A673 (cell line): ENCODE measurements at regions of chrX and their contacts with region 1.

Region 1: DNA sequence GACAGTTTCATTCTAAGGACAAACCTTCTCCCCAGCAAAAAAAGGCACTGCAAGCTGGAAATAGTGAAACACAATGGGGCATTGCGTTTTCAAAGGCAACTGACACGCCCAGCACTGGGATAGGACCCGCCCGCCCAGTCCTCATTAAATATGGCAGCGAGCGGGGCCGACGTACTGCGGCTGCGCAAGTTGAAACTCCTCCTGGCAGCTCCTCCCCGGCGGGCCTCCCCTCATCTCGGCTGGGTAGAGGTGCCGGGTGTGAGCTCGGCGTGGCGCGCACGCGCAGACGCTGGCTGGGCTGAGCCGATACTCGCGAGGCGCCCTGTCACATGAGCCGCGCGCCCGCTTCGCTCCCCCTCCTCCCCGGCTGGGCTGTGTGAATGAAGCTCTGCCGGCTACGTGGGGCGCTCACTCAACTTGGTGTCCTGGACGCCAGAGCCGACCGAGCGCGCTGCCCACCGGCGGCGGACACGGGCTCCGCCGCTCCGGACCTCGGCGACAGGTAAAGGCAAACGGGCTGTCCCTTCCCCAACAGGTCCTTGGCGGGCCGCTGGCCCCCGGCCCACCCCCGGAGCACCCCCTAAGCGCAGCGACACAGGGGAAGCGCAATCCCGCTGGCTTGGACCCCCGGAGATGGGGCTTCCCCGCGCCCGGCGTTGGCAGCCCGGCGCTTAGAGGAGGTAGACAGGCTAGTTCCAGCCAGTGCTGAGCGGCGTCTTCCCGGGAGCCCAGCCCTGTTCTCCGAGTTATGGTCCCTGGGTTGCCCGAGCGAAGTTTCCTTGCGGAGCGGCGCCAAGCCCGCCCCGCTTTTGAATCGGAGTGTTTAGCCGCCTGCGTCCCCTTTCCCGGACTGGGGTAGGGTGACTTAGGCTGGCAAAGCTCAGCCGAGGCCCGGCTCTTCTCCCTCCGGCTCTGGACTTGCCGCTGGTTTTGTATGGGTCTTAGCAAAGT is at the start of gene CLCN5:
- DNase-seq: peak; percentile 96
- H3K4me3 ChIP-seq: peak within 1 kb of the TSS; percentile 69
- H3K27ac ChIP-seq: peak within 1 kb of the TSS; percentile 79
- H3K4me1 ChIP-seq: peaks cover 7% of the 10 kb centered on the region
- H3K27me3 ChIP-seq: no peaks in the 10 kb centered on the region
- CTCF ChIP-seq: no peak
- total RNA-seq, gene CLCN5: 21.4 and 25.3 TPM in 2 replicates

Region 2: GRCh38 chrX:49884290-49884862 is 38.2 kb before region 1 on chrX:
- CTCF ChIA-PET with region 1: interaction called, 10 read pairs
- POLR2A ChIA-PET with region 1: no interaction called
- intact Hi-C with region 1: loop called (anchors 5 kb)
- DNase-seq: peak; percentile 74
- H3K4me3 ChIP-seq: no peak overlapping the region
- H3K27ac ChIP-seq: no peak overlapping the region
- H3K4me1 ChIP-seq: no peaks in the 10 kb centered on the region
- H3K27me3 ChIP-seq: no peaks in the 10 kb centered on the region
- CTCF ChIP-seq: peak; percentile 93

Region 3: DNA sequence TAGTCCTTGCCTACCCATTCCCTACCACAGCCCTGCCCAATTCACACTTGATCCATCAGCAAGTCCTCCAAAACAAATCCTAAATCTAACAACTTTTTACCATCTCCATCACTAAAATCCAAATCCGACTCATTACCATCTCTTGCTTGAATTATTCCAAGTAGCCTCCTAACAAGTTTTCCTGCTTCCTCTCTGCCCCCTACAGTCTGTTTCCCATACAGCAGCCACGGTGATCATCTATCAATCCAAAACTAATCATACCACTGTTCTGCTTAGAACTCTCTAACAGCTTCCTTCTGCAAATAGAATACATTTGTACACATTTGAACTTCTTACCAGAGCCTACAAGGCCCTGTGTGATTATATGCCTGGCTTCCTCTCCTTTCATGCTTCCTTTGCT is 758.4 kb after region 1 on chrX:
- CTCF ChIA-PET with region 1: no interaction called
- POLR2A ChIA-PET with region 1: no interaction called
- intact Hi-C with region 1: loop called (anchors 10 kb)
- DNase-seq: peak; percentile 68
- H3K4me3 ChIP-seq: no peak overlapping the region
- H3K27ac ChIP-seq: peak overlapping the region; percentile 64
- H3K4me1 ChIP-seq: peaks cover 21% of the 10 kb centered on the region
- H3K27me3 ChIP-seq: peaks cover under 1% of the 10 kb centered on the region
- CTCF ChIP-seq: peak; percentile 71

Region 4: GRCh38 chrX:50736656-50737055 is 814.1 kb after region 1 on chrX:
- CTCF ChIA-PET with region 1: no interaction called
- POLR2A ChIA-PET with region 1: no interaction called
- intact Hi-C with region 1: no loop called
- DNase-seq: no peak
- H3K4me3 ChIP-seq: no peak overlapping the region
- H3K27ac ChIP-seq: no peak overlapping the region
- H3K4me1 ChIP-seq: no peaks in the 10 kb centered on the region
- H3K27me3 ChIP-seq: no peaks in the 10 kb centered on the region
- CTCF ChIP-seq: no peak